ENCODE measurements at regions of chr2 and their contacts with region 1.

Region 1: GRCh38 chr2:177263451-177264208 is 897 bp downstream of the NFE2L2 start:
- DNase-seq: peak; percentile 83 to 98 (median 93)
- ATAC-seq: peak; percentile 65 to 74 (median 66)
- H3K4me3 ChIP-seq: peak overlapping the region; percentile 84 to 91
- H3K4me3 Mint-ChIP-seq: peak overlapping the region; percentile 96 to 97 (median 96)
- H3K27ac ChIP-seq: peak overlapping the region; percentile 98
- H3K27ac Mint-ChIP-seq: peak overlapping the region; percentile 98 to 99
- H3K4me1 ChIP-seq: peaks cover 30 to 33% of the 10 kb centered on the region in 2 experiments
- H3K4me1 Mint-ChIP-seq: peaks cover 53 to 58% (median 56%) of the 10 kb centered on the region in 3 donors
- H3K27me3 ChIP-seq: no peaks in the 10 kb centered on the region
- H3K27me3 Mint-ChIP-seq: no peaks in the 10 kb centered on the region

Region 2: GRCh38 chr2:177188482-177189469 is 74.9 kb before region 1 on chr2:
- CTCF ChIA-PET with region 1: interaction called, 3 to 10 read pairs
- POLR2A ChIA-PET with region 1: no interaction called
- DNase-seq: no peak
- ATAC-seq: no peak
- H3K4me3 ChIP-seq: no peak overlapping the region
- H3K4me3 Mint-ChIP-seq: no peak overlapping the region
- H3K27ac ChIP-seq: no peak overlapping the region
- H3K27ac Mint-ChIP-seq: no peak overlapping the region
- H3K4me1 ChIP-seq: no peaks in the 10 kb centered on the region
- H3K4me1 Mint-ChIP-seq: peaks cover 0 to 2% (median 0%) of the 10 kb centered on the region in 3 donors
- H3K27me3 ChIP-seq: no peaks in the 10 kb centered on the region
- H3K27me3 Mint-ChIP-seq: peaks cover 0 to 2% of the 10 kb centered on the region in 2 donors

Region 3: DNA sequence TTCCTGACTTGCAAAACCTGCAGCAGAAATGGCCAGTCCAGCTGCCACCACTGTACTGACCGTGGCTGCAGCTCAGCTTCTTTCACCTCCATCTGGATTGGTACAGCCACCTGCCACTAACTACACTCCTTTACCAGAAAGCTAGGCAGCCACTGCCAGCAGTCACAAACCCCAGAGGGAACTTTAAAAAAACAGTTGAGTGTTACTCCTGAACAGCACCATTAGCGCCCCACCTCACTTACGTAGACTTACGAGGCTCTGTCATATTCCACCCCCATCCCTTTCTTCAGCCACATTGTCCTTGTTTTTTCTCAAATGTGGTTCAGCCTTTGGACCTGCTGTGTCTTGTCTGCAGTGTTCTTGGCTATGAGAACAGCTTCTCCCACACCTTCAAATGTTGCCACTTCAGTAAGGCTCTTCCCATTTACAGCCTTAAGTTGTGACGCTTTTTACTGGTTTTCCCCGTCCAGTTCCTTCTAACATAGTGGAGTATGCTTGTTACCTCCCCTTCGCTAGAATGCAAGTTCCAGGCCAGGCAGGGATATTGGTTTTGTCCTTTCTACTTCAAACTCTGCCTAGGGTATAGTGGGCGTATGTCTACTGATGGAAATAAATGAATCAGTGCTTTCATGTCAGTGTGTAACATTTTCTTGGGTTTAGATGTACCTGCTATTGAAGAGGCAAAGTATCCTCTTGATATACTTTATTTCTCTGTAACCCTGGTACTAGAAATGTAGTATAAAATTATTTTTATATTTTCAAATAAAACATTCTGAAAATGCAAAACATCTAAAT is 34.0 kb before region 1 on chr2:
- CTCF ChIA-PET with region 1: interaction called, 4 to 5 read pairs
- POLR2A ChIA-PET with region 1: interaction called, 3 to 14 read pairs
- DNase-seq: no peak
- ATAC-seq: peak in 3 of 4 experiments; percentile 12 to 19 (median 15)
- H3K4me3 ChIP-seq: no peak overlapping the region
- H3K4me3 Mint-ChIP-seq: no peak overlapping the region
- H3K27ac ChIP-seq: no peak overlapping the region
- H3K27ac Mint-ChIP-seq: peak overlapping the region; percentile 33 to 40
- H3K4me1 ChIP-seq: no peaks in the 10 kb centered on the region
- H3K4me1 Mint-ChIP-seq: peaks cover 47 to 49% (median 49%) of the 10 kb centered on the region in 3 donors
- H3K27me3 ChIP-seq: no peaks in the 10 kb centered on the region
- H3K27me3 Mint-ChIP-seq: no peaks in the 10 kb centered on the region

Region 4: GRCh38 chr2:177289824-177290628 is 26.4 kb after region 1 on chr2:
- CTCF ChIA-PET with region 1: interaction called, 6 to 11 read pairs
- POLR2A ChIA-PET with region 1: interaction called, 3 to 4 read pairs
- DNase-seq: peak in 1 of 35 experiments; percentile 39
- ATAC-seq: peak; percentile 67 to 84 (median 78)
- H3K4me3 ChIP-seq: no peak overlapping the region
- H3K4me3 Mint-ChIP-seq: peak overlapping the region; percentile 53 to 69 (median 59)
- H3K27ac ChIP-seq: peak overlapping the region; percentile 43
- H3K27ac Mint-ChIP-seq: peak overlapping the region; percentile 93
- H3K4me1 ChIP-seq: peaks cover 12 to 14% of the 10 kb centered on the region in 2 experiments
- H3K4me1 Mint-ChIP-seq: peaks cover 22 to 24% (median 23%) of the 10 kb centered on the region in 3 donors
- H3K27me3 ChIP-seq: no peaks in the 10 kb centered on the region
- H3K27me3 Mint-ChIP-seq: no peaks in the 10 kb centered on the region

Region 5: GRCh38 chr2:177332041-177332991 is 68.7 kb after region 1 on chr2:
- CTCF ChIA-PET with region 1: interaction called, 15 to 39 read pairs
- POLR2A ChIA-PET with region 1: interaction called, 4 to 5 read pairs
- DNase-seq: peak in 30 of 35 experiments; percentile 8 to 79 (median 23)
- ATAC-seq: peak; percentile 77 to 86 (median 79)
- H3K4me3 ChIP-seq: no peak overlapping the region
- H3K4me3 Mint-ChIP-seq: peak overlapping the region in 1 of 3 donors; percentile 13
- H3K27ac ChIP-seq: no peak overlapping the region
- H3K27ac Mint-ChIP-seq: peak overlapping the region in 1 of 2 donors; percentile 73
- H3K4me1 ChIP-seq: peaks cover 2 to 5% of the 10 kb centered on the region in 2 experiments
- H3K4me1 Mint-ChIP-seq: peaks cover 12 to 20% (median 17%) of the 10 kb centered on the region in 3 donors
- H3K27me3 ChIP-seq: no peaks in the 10 kb centered on the region
- H3K27me3 Mint-ChIP-seq: no peaks in the 10 kb centered on the region

Region 6: GRCh38 chr2:177552422-177553175 is 289.0 kb after region 1 on chr2:
- CTCF ChIA-PET with region 1: no interaction called
- POLR2A ChIA-PET with region 1: interaction called, 3 to 10 read pairs
- DNase-seq: peak; percentile 78 to 96 (median 91)
- ATAC-seq: peak; percentile 92 to 95 (median 93)
- H3K4me3 ChIP-seq: peak overlapping the region; percentile 87 to 99
- H3K4me3 Mint-ChIP-seq: peak overlapping the region; percentile 96 to 99 (median 97)
- H3K27ac ChIP-seq: peak overlapping the region; percentile 99
- H3K27ac Mint-ChIP-seq: peak overlapping the region; percentile 100
- H3K4me1 ChIP-seq: peaks cover 2 to 14% of the 10 kb centered on the region in 2 experiments
- H3K4me1 Mint-ChIP-seq: peaks cover 12 to 19% (median 16%) of the 10 kb centered on the region in 3 donors
- H3K27me3 ChIP-seq: no peaks in the 10 kb centered on the region
- H3K27me3 Mint-ChIP-seq: peaks cover 0 to 4% of the 10 kb centered on the region in 2 donors

Measured in T-cell (primary cell).